Colonic mucosa (tissue), 4 donors: ENCODE measurements at regions of chr5 and their contacts with region 1.

Region 1: GRCh38 chr5:179697993-179698934 is 503 bp upstream of the CANX start:
- DNase-seq: peak; percentile 99
- H3K4me3 ChIP-seq: peak overlapping the region; percentile 72
- H3K27ac ChIP-seq: peak overlapping the region; percentile 95
- H3K4me1 ChIP-seq: peaks cover 15% of the 10 kb centered on the region
- H3K27me3 ChIP-seq: no peaks in the 10 kb centered on the region
- CTCF ChIP-seq: no peak

Region 2: DNA sequence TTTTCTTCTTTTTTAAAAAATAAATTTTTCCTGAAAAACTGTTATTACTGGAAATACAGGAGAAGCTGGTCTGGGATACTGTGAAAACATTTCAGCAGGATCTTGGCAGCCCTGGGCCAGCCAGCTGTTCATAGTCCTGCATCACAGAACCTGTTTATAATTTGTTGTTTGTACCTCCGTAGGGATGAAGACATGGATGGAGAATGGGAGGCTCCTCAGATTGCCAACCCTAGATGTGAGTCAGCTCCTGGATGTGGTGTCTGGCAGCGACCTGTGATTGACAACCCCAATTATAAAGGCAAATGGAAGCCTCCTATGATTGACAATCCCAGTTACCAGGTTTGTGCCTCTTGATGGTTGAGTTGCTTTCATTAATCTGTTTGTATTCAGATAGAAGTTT is 22.0 kb after region 1 on chr5:
- intact Hi-C with region 1: no loop called
- DNase-seq: no peak
- H3K4me3 ChIP-seq: no peak overlapping the region
- H3K27ac ChIP-seq: no peak overlapping the region
- H3K4me1 ChIP-seq: no peaks in the 10 kb centered on the region
- H3K27me3 ChIP-seq: no peaks in the 10 kb centered on the region
- CTCF ChIP-seq: no peak

Region 3: GRCh38 chr5:179732417-179732917 is 34.2 kb after region 1 on chr5 and contains the start of gene MAML1:
- intact Hi-C with region 1: loop called (anchors 5 kb)
- DNase-seq: peak; percentile 100
- H3K4me3 ChIP-seq: peak within 1 kb of the TSS; percentile 77
- H3K27ac ChIP-seq: peak within 1 kb of the TSS; percentile 92
- H3K4me1 ChIP-seq: peaks cover 11% of the 10 kb centered on the region
- H3K27me3 ChIP-seq: no peaks in the 10 kb centered on the region
- CTCF ChIP-seq: no peak
- total RNA-seq, gene MAML1: 29.7 TPM